GM13977 (cell line): ENCODE measurements at regions of chr11 and their contacts with region 1.

Region 1: GRCh38 chr11:35040221-35040942 is 98.6 kb upstream of the CD44 start:
- DNase-seq: peak; percentile 30
- CTCF ChIP-seq: no peak

Region 2: GRCh38 chr11:34907934-34908593 is 132.3 kb before region 1 on chr11:
- in situ Hi-C with region 1: no loop called
- DNase-seq: peak; percentile 10
- CTCF ChIP-seq: no peak

Region 3: GRCh38 chr11:34997952-34998528 is 42.3 kb before region 1 on chr11:
- in situ Hi-C with region 1: loop called (anchors 10 kb)
- DNase-seq: peak; percentile 13
- CTCF ChIP-seq: peak; percentile 42